Transverse colon (tissue), 4 donors: ENCODE measurements at regions of chrX and their contacts with region 1.

Region 1: DNA sequence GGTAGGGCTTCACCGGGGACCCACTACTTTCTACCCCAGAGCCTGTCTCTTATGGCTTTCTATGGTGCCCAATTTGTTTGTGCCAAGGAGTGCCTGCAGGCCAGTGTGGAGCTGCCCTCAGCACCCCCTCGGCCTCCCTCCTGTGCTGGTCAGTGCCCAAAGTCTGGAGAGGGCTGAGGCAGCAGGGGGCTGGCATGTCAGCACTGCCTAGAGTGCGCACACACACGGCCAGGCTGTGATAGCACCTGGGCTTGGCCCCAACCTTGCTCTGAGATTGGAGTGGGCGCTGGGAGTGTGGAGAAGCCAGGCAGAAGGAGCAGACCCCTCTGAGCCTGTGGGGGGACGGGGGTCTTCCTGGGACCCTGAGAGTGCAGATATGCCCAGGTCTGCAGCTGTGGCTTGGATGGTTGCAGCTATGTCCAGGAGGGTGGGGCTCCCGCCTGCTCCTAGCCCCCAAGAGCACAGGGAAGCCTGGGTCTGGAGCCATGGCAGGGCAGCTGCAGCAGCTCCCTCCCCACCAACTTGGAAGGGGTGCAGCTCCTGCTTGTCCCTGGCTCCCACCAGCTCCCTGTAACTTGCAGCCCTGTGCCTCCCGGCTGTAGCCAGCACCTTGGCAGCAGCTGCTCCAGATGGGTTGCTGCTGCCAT is 46.3 kb downstream of the GAGE1 start:
- DNase-seq: no peak
- H3K4me3 ChIP-seq: no peak overlapping the region
- H3K27ac ChIP-seq: no peak overlapping the region
- H3K4me1 ChIP-seq: no peaks in the 10 kb centered on the region
- H3K27me3 ChIP-seq: no peaks in the 10 kb centered on the region
- CTCF ChIP-seq: no peak
- EP300 ChIP-seq: no peak
- POLR2A ChIP-seq: no peak

Region 2: DNA sequence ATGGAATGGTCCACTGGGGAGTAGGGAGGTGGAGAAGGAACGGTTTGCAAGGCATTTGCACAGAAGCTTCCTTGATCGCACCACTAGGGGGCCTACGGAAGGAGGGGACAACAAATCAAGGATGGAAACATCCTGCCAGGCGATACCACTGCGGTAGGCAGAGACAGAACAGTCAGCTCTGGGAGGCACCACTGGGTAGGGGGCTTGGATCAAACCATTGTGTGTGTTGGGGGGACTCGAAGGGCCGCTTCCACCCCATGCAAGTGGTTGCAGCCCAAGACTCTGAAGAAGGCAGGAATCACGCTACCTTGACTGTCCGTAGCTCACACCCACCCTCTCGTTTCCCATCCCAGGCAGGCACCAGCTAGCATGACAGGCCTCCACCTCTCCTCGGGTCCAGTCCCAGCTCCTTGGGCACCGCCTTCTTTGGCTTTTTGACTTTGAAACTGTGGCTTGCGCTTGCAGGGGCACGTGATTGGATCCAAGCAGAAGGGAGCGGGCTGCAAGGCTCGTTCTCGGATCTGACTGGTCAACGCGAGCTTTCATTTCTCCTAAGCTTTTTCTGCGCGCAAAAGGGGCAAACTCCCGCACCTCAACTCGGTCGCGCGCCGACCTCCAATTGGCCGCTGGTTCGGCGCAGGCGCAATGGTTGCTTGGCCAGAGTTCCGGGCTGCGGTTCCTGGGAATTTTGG is 17.9 kb before region 1 on chrX:
- in situ Hi-C with region 1: no loop called
- intact Hi-C with region 1: loop called (anchors 1 kb)
- DNase-seq: no peak
- H3K4me3 ChIP-seq: no peak overlapping the region
- H3K27ac ChIP-seq: no peak overlapping the region
- H3K4me1 ChIP-seq: no peaks in the 10 kb centered on the region
- H3K27me3 ChIP-seq: no peaks in the 10 kb centered on the region
- CTCF ChIP-seq: no peak
- EP300 ChIP-seq: no peak
- POLR2A ChIP-seq: no peak